Heart left ventricle (tissue), 16 donors: ENCODE measurements at regions of chr6 and their contacts with region 1.

Region 1: DNA sequence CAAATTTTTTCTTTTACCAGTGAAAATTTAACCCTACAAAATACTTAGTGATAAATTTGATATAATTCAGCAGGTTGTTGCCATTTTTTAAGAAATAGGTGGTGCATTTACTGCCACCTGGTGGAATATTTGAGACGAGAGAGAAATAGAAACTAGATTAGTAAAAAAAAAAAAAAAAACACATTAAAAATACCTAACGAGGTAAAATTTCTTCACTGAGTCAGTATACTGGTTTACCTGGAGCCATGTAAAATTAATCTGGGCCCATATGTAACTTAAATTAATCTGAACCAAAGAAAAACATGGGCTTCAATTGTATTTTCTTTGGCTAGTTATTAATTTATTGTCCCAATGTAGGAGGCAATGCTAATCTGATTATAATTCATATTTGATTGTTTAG is 520.8 kb downstream of the EPM2A start:
- DNase-seq: no peak
- ATAC-seq: no peak
- H3K4me3 ChIP-seq: peak overlapping the region in 1 of 12 donors; percentile 17
- H3K27ac ChIP-seq: no peak overlapping the region
- H3K4me1 ChIP-seq: no peaks in the 10 kb centered on the region
- H3K27me3 ChIP-seq: no peaks in the 10 kb centered on the region
- CTCF ChIP-seq: peak; percentile 40 to 72 (median 59)
- POLR2A ChIP-seq: no peak

Region 2: GRCh38 chr6:144820270-144820669 is 394.3 kb before region 1 on chr6:
- intact Hi-C with region 1: loop called in 1 of 10 experiments (anchors 10 kb)
- DNase-seq: no peak
- ATAC-seq: no peak
- H3K4me3 ChIP-seq: no peak overlapping the region
- H3K27ac ChIP-seq: no peak overlapping the region
- H3K4me1 ChIP-seq: peaks cover 0 to 6% (median 0%) of the 10 kb centered on the region in 12 donors
- H3K27me3 ChIP-seq: no peaks in the 10 kb centered on the region
- CTCF ChIP-seq: no peak
- POLR2A ChIP-seq: no peak

Region 3: DNA sequence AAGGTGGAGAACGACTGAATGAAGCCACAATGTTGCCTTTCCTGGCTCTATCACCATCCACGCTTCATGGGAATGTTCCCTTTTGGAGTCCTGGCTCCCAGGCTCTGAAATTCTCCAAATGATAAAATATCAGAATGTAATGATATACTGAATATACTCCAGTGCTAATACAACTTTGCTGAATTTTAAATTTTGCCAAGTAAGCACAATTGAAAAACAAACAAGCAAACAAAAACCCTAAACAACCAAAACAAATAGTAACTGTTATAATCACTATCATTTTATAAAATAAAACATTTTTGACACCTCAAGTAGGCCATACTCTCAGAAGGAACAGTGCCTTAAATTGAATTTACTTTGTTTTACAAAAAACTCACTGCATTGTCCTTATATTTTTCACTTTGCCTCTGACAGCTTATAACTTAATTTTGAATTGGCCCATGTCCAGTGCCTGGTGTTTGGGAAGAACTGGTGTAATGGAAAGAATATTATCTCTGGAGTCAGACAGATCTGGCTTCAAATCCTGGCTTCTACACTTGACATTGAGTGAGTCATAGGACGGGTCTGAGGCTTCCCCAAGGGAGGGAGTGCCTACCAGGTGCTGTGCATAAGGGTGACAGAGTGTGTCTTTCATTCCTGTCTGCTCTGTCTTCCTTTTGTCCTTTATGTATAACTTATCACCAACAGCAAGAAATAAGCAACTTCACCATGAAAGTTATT is 177.6 kb before region 1 on chr6:
- intact Hi-C with region 1: loop called in 2 of 10 experiments (anchors 10 kb)
- DNase-seq: peak in 3 of 5 donors; percentile 14 to 59 (median 28)
- ATAC-seq: peak; percentile 76 to 99 (median 90)
- H3K4me3 ChIP-seq: no peak overlapping the region
- H3K27ac ChIP-seq: no peak overlapping the region
- H3K4me1 ChIP-seq: peaks cover 0 to 11% (median 0%) of the 10 kb centered on the region in 12 donors
- H3K27me3 ChIP-seq: no peaks in the 10 kb centered on the region
- CTCF ChIP-seq: no peak
- POLR2A ChIP-seq: no peak